Dendritic cell treated with granulocyte-macrophage colony-stimulating factor and Interleukin-4, amounts not matched to agents 40 ng/mL and 50 ng/mL, for 4 days (primary cell): ENCODE measurements at regions of chr11 and their contacts with region 1.

Region 1: GRCh38 chr11:60396799-60397198 is 540 bp downstream of the MS4A14 start:
- H3K4me3 Mint-ChIP-seq: no peak overlapping the region
- H3K27ac Mint-ChIP-seq: peak overlapping the region; percentile 92
- H3K4me1 Mint-ChIP-seq: peaks cover 62% of the 10 kb centered on the region
- H3K27me3 Mint-ChIP-seq: no peaks in the 10 kb centered on the region

Region 2: DNA sequence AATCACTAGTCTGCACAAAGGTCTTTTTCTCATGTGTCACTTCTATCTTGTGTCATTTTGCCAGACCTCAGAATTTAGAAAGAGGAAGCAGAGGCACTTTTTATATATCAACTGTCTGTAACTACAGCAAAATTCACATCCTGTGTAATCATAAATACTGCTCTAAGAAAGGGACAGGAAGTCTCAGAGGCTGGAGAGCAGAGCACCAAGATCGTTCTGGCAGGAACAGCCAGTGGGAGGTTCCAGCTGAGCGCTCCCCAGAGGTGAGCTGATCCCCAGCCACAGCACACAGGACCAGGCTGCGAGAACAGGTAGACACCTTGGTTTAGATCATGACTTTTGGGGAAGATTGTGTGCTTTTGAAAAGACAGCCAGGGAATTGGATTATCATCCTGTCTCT is 18.4 kb before region 1 on chr11 and contains the start of gene MS4A7:
- intact Hi-C with region 1: loop called (anchors 1 kb)
- H3K4me3 Mint-ChIP-seq: peak within 1 kb of the TSS; percentile 96
- H3K27ac Mint-ChIP-seq: peak within 1 kb of the TSS; percentile 93
- H3K4me1 Mint-ChIP-seq: peaks cover 79% of the 10 kb centered on the region
- H3K27me3 Mint-ChIP-seq: no peaks in the 10 kb centered on the region